Activated CD4-positive, alpha-beta memory T cell treated with anti-CD3 and anti-CD28 coated beads, Interleukin-2, amount 10 ng/mL, durations not matched to agents 7 days and 5 days (primary cell): ENCODE measurements at regions of chr11 and their contacts with region 1.

Region 1: GRCh38 chr11:102293873-102294601 is 23.2 kb upstream of the BIRC3 start:
- DNase-seq: no peak
- H3K4me3 Mint-ChIP-seq: peak overlapping the region; percentile 83
- H3K27ac Mint-ChIP-seq: peak overlapping the region; percentile 87
- H3K4me1 Mint-ChIP-seq: peaks cover 21% of the 10 kb centered on the region
- H3K27me3 Mint-ChIP-seq: no peaks in the 10 kb centered on the region

Region 2: DNA sequence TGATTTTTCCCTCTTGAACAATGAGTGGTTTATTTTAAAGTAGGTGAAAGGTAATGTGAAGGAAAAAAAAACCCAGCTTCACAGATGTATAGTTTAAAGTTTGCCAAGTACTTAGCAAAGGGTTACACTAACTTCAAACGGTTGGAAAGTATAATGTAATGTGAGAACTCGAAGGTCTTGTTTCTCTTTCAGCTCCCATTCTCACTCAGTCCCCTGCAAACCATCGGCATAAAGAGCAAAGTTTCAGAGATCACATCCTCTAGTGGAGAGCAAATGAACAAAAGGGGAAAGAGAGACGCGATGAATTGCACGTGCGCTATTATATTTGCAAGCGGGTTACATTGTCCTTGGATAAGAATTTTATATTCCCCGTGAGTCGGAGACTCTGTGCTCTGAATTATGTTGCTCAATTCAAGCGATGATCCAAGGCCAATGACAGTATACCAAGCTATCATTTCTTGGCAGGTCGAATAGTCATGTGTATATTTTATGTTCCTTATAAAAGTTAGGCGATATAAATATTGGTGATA is 14.3 kb before region 1 on chr11:
- CTCF ChIA-PET with region 1: interaction called, 15 read pairs
- POLR2A ChIA-PET with region 1: no interaction called
- DNase-seq: no peak
- H3K4me3 Mint-ChIP-seq: no peak overlapping the region
- H3K27ac Mint-ChIP-seq: no peak overlapping the region
- H3K4me1 Mint-ChIP-seq: peaks cover 6% of the 10 kb centered on the region
- H3K27me3 Mint-ChIP-seq: peaks cover 11% of the 10 kb centered on the region

Region 3: GRCh38 chr11:102317099-102317767 is 23.2 kb after region 1 on chr11 and contains the start of gene BIRC3:
- CTCF ChIA-PET with region 1: interaction called, 158 read pairs
- POLR2A ChIA-PET with region 1: interaction called, 26 read pairs
- DNase-seq: peak; percentile 92
- H3K4me3 Mint-ChIP-seq: peak within 1 kb of the TSS; percentile 94
- H3K27ac Mint-ChIP-seq: peak within 1 kb of the TSS; percentile 91
- H3K4me1 Mint-ChIP-seq: peaks cover 69% of the 10 kb centered on the region
- H3K27me3 Mint-ChIP-seq: no peaks in the 10 kb centered on the region
- total RNA-seq, gene BIRC3: 79.0 to 80.0 TPM

Region 4: DNA sequence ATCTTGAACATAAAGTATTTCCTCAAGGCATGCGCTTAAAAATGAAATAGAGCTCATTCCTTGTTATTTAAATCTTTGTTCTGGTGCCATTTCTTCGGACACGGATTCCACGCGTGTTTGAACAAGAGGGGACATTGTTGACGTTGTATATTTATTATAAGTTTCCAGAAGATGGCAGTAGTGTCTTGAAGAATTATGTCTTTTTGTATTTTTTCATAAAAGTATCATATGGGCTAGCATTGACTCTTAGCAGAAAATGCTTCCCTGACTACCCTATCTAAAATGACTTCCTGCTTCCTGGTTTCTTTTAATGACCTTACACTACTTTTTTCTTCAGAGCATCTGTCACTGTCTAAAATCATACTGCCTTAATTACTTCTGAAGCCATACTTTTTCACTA is 73.3 kb after region 1 on chr11:
- CTCF ChIA-PET with region 1: interaction called, 14 read pairs
- POLR2A ChIA-PET with region 1: no interaction called
- DNase-seq: no peak
- H3K4me3 Mint-ChIP-seq: no peak overlapping the region
- H3K27ac Mint-ChIP-seq: no peak overlapping the region
- H3K4me1 Mint-ChIP-seq: peaks cover 25% of the 10 kb centered on the region
- H3K27me3 Mint-ChIP-seq: no peaks in the 10 kb centered on the region

Region 5: DNA sequence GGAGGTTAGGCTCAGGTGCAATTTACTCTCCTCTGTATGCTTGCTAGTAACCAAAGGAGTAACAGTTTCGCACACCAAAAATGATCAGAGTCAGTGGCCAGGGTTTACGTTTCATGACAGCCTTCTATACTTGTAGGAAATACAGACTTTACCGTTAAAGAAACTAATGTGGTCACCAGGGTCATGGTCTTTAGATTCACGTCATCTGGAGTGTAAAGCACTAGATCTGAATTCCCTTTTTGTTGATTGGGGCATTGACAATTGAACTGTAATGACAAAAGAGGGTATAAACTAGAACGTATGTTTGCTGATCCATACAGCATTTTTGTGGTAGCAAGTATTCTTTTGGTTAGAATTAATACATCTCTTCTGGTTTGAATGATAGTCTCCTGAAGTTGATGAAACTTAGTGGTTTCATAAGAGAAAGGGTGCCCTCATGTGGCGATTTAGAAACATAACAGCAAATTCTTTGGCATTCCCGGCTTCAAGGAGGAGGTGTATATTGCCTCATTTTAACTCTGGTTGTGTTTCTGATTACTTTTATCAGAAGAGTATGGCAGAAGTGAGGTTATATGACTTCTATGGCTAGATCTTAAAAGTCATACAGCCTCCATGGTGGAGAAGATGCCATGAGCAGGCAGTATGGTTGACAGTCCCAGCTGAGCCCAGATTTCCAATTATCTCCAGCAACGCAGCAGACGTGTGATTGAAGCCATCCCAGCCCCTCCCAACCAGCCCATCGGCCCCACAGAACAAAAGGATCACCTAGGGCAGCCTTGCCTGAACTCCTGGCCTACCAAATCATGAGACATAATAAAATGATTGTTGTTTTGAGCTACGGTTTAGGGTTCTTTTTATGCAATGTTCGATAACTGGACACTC is 201.4 kb after region 1 on chr11:
- CTCF ChIA-PET with region 1: interaction called, 15 read pairs
- POLR2A ChIA-PET with region 1: no interaction called
- DNase-seq: peak; percentile 24
- H3K4me3 Mint-ChIP-seq: no peak overlapping the region
- H3K27ac Mint-ChIP-seq: no peak overlapping the region
- H3K4me1 Mint-ChIP-seq: peaks cover 7% of the 10 kb centered on the region
- H3K27me3 Mint-ChIP-seq: peaks cover 24% of the 10 kb centered on the region

Region 6: DNA sequence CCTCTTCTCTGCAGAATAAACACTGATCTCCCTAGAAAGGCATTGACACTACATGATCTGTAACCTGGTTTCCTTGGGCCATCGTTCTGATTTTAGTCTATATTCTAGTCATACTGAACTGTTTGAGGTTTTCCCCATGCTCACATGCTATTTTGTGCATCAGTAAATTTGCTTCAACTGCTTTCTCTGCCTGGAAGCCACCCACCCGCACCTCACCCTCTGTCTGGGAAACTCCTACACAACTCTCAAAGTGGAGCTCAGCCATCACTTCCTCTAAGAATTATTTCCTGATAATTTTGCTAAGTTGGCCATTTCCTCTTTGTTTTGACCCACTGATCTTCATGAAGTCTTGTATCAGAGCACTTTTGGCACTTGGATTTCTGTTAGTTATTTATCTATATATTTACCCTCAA is 295.0 kb after region 1 on chr11:
- CTCF ChIA-PET with region 1: no interaction called
- POLR2A ChIA-PET with region 1: no interaction called
- DNase-seq: no peak
- H3K4me3 Mint-ChIP-seq: no peak overlapping the region
- H3K27ac Mint-ChIP-seq: no peak overlapping the region
- H3K4me1 Mint-ChIP-seq: peaks cover 7% of the 10 kb centered on the region
- H3K27me3 Mint-ChIP-seq: no peaks in the 10 kb centered on the region